Posterior vena cava (tissue), 2 donors: ENCODE measurements at regions of chr9 and their contacts with region 1.

Region 1: GRCh38 chr9:86697999-86698398 is 249.3 kb downstream of the GAS1 start:
- DNase-seq: no peak

Region 2: GRCh38 chr9:86664603-86665002 is 33.4 kb before region 1 on chr9:
- intact Hi-C with region 1: loop called in 1 of 2 experiments (anchors 1 kb)
- DNase-seq: no peak